ENCODE measurements at regions of chr5 and their contacts with region 1.

Region 1: GRCh38 chr5:98773464-98774191 is at the start of gene RGMB:
- DNase-seq: peak; percentile 98
- H3K4me3 ChIP-seq: peak within 1 kb of the TSS; percentile 86
- CTCF ChIP-seq: no peak

Region 2: DNA sequence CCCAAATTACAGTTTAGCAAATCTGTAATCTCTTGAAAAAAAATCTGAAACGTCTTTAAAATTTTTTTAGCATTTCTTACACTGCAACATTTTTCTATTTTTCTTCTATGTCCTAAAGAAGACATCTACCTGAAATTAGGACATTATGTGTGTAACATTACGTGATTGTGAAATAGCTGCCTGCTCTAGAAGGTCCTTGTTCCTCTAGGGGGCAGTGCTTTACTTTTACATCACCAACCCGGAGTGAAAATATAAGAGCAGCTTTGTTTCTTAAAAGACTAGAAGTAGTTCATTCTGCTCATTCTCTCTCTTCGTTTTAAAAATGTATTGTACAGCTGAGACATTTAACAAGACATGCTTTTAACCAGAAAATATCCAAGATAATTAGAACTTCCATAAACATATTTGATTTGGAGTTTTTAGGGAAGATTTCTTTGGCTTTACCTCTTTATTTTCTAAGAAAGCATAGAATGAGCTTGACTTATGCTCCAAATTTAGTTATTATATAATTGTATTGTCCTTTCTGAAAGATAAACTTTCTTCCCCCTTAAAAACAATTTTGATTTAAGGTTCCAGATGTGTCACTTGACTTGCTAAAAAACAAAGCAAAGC is 1542.5 kb before region 1 on chr5:
- CTCF ChIA-PET with region 1: interaction called, 16 read pairs
- POLR2A ChIA-PET with region 1: interaction called, 4 read pairs
- DNase-seq: peak; percentile 44
- H3K4me3 ChIP-seq: no peak overlapping the region
- CTCF ChIP-seq: peak; percentile 74

Region 3: GRCh38 chr5:98349251-98349995 is 424.2 kb before region 1 on chr5:
- CTCF ChIA-PET with region 1: interaction called, 63 read pairs
- POLR2A ChIA-PET with region 1: interaction called, 4 read pairs
- DNase-seq: peak; percentile 63
- H3K4me3 ChIP-seq: no peak overlapping the region; the same call in 1 of the 2 replicates
- CTCF ChIP-seq: peak; percentile 37

Region 4: DNA sequence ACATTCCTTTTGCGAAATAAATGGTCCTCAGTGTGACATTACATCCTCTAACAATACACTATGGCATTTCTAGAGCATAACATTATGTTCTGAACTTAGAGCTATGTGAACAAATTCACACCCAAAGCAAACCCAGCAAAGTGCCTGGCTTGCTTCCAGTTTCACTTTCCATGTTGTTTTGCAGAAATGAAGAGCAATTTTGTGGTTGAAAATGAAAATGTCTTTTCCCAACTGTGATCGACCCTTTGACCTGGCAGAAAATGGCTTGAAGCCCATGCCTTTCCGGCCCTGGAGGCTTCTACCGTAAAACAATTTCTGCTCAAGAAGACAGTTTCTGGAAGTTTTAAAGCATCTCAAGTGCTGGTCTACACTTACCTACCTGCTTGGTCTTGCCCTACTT is 344.8 kb before region 1 on chr5:
- CTCF ChIA-PET with region 1: interaction called, 46 read pairs
- POLR2A ChIA-PET with region 1: interaction called, 5 read pairs
- DNase-seq: no peak
- H3K4me3 ChIP-seq: no peak overlapping the region
- CTCF ChIP-seq: no peak

Region 5: DNA sequence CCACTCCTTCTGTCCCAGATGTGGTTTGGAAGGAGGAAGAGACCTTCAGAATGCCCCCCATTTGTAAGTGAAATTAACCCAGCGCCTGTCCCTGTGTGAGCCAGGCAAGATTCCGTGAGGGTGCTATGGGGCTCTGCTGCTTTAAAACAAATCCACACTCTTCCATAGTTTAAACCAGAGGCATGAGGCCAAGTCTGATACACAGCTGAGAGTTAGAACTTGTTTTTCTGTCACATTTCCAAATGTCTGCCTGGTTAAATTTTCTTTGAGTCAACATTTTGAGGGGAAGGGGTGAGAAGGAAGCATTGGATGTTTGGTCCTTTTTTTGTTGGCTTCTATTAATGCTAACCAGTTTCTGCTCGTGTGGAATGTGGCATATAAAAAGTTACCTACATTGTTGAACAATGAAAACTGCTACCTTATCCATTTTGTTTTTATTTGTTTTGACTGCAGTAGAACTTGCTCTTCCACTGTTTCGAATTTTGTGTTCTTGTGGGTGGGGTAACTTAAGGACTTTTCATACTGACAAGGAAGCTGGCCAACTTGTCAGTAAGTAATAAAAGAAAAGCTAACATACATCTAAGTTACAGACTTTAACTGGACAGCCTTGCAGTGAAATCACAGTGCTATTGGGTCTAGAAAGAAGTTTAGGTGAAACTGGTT is 12.7 kb after region 1 on chr5:
- CTCF ChIA-PET with region 1: interaction called, 42 read pairs
- POLR2A ChIA-PET with region 1: interaction called, 6 read pairs
- DNase-seq: no peak
- H3K4me3 ChIP-seq: no peak overlapping the region
- CTCF ChIP-seq: no peak